Ascending aorta (tissue), 2 donors: ENCODE measurements at regions of chr3 and their contacts with region 1.

Region 1: DNA sequence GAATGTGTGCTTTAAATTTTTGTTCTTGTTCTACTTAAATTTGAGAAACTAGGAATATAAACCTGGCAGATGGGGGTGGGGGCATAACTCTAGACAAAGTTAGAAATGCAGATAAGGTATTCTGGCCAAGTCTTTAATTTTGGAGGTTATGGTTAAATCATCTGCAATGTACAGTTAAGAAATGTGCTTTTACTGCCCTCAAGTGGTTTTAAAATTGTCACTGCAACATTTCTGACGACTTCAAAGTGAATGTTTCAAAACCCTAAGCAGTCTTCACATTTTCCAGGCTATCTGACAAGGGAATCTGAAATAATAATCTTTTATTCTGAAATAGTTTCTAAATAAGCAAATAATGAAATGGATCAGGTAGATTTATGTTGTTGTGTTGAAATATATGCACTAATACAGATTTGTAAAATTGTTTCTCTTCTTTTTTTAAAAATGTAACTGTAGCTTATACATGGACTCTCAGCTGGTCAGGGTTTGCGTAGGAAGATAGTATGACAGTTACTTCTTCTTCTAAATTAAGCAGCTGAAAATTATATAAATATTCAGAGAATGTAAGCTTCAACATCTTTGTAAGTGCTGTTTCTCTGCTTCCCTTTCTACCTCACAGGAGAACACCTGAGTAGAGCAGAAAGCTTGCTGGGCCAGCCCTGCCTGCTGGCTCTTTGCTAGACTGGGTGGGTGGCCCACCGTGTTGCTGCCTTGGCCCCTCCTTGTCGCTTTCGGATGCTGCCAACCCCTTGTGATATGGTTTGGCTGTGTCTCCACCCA is 45.0 kb downstream of the SUCNR1 start:
- DNase-seq: no peak
- H3K4me3 ChIP-seq: no peak overlapping the region
- H3K27ac ChIP-seq: peak overlapping the region in 1 of 2 donors; percentile 35
- H3K4me1 ChIP-seq: peaks cover 0 to 6% of the 10 kb centered on the region in 2 donors
- H3K27me3 ChIP-seq: no peaks in the 10 kb centered on the region
- CTCF ChIP-seq: peak; percentile 56 to 73 (median 61)

Region 2: DNA sequence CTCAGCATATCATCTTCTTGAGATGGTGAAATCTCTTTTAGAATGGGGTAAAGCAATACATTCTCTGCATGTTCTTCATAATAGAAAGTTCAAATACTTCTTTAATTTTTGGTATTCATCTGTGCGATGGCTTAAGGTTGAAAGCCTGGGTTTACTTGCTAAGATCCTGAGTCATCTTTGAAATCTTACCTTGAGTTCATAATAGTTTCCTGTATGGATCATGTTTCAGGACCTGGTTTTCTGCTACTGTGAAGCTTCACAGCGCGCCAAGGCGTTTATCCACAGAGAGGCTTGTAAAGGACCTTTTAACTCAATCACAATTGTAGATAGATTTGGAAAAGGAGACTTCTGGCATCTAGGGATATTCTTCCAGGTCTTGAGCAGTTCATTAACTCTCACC is 794.0 kb before region 1 on chr3:
- intact Hi-C with region 1: no loop called
- DNase-seq: no peak
- H3K4me3 ChIP-seq: no peak overlapping the region
- H3K27ac ChIP-seq: no peak overlapping the region
- H3K4me1 ChIP-seq: no peaks in the 10 kb centered on the region
- H3K27me3 ChIP-seq: no peaks in the 10 kb centered on the region
- CTCF ChIP-seq: no peak

Region 3: GRCh38 chr3:151227807-151228665 is 690.4 kb before region 1 on chr3:
- intact Hi-C with region 1: loop called (anchors 5 kb)
- DNase-seq: peak; percentile 14 to 80
- H3K4me3 ChIP-seq: no peak overlapping the region
- H3K27ac ChIP-seq: peak overlapping the region in 1 of 2 donors; percentile 5
- H3K4me1 ChIP-seq: peaks cover 6 to 8% of the 10 kb centered on the region in 2 donors
- H3K27me3 ChIP-seq: no peaks in the 10 kb centered on the region
- CTCF ChIP-seq: peak; percentile 83 to 88 (median 86)

Region 4: DNA sequence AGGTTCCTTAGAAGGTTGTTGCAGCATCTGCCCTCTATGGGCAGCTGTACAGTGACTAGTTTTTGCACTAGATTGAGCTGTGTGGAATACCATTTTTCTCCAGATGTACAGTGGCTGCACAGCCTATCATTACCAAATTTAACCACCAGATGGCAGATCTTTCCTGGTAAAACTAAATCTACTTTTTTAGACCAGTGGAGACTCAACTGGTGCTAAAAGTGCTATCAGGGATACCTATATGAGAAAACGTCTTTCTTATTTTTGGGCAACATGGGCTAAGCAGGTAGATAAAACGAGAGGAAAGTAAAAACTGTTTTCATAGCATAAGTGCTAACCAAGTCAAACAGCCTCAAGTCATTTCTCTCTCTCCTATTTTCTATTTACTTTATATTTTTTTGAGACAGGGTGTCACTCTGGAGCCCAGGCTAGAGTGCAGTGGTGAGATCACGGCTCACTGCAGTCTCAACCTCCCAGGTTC is 478.8 kb before region 1 on chr3:
- intact Hi-C with region 1: loop called (anchors 5 kb)
- DNase-seq: no peak
- H3K4me3 ChIP-seq: no peak overlapping the region
- H3K27ac ChIP-seq: no peak overlapping the region
- H3K4me1 ChIP-seq: no peaks in the 10 kb centered on the region
- H3K27me3 ChIP-seq: no peaks in the 10 kb centered on the region
- CTCF ChIP-seq: peak; percentile 73 to 81 (median 79)

Region 5: GRCh38 chr3:151770956-151771355 is 147.5 kb before region 1 on chr3:
- intact Hi-C with region 1: loop called (anchors 10 kb)
- DNase-seq: peak in 1 of 2 donors; percentile 67
- H3K4me3 ChIP-seq: no peak overlapping the region
- H3K27ac ChIP-seq: peak overlapping the region; percentile 51
- H3K4me1 ChIP-seq: peaks cover 3 to 26% of the 10 kb centered on the region in 2 donors
- H3K27me3 ChIP-seq: no peaks in the 10 kb centered on the region
- CTCF ChIP-seq: no peak

Region 6: GRCh38 chr3:151838583-151839312 is 79.7 kb before region 1 on chr3:
- intact Hi-C with region 1: loop called (anchors 2 kb)
- DNase-seq: peak in 1 of 2 donors; percentile 70
- H3K4me3 ChIP-seq: peak overlapping the region in 1 of 2 donors; percentile 41
- H3K27ac ChIP-seq: no peak overlapping the region
- H3K4me1 ChIP-seq: peaks cover 0 to 4% of the 10 kb centered on the region in 2 donors
- H3K27me3 ChIP-seq: no peaks in the 10 kb centered on the region
- CTCF ChIP-seq: peak; percentile 68 to 88 (median 78)

Region 7: GRCh38 chr3:151976211-151977050 is 58.0 kb after region 1 on chr3:
- intact Hi-C with region 1: no loop called
- DNase-seq: no peak
- H3K4me3 ChIP-seq: no peak overlapping the region
- H3K27ac ChIP-seq: peak overlapping the region; percentile 12 to 38
- H3K4me1 ChIP-seq: peaks cover 0 to 17% of the 10 kb centered on the region in 2 donors
- H3K27me3 ChIP-seq: no peaks in the 10 kb centered on the region
- CTCF ChIP-seq: no peak